ACHN (cell line): ENCODE measurements at regions of chr1 and their contacts with region 1.

Region 1: GRCh38 chr1:15803354-15803753 is 4.1 kb downstream of the UQCRHL start:
- DNase-seq: peak; percentile 47

Region 2: GRCh38 chr1:15902882-15903281 is 99.5 kb after region 1 on chr1:
- in situ Hi-C with region 1: no loop called
- DNase-seq: peak; percentile 73

Region 3: DNA sequence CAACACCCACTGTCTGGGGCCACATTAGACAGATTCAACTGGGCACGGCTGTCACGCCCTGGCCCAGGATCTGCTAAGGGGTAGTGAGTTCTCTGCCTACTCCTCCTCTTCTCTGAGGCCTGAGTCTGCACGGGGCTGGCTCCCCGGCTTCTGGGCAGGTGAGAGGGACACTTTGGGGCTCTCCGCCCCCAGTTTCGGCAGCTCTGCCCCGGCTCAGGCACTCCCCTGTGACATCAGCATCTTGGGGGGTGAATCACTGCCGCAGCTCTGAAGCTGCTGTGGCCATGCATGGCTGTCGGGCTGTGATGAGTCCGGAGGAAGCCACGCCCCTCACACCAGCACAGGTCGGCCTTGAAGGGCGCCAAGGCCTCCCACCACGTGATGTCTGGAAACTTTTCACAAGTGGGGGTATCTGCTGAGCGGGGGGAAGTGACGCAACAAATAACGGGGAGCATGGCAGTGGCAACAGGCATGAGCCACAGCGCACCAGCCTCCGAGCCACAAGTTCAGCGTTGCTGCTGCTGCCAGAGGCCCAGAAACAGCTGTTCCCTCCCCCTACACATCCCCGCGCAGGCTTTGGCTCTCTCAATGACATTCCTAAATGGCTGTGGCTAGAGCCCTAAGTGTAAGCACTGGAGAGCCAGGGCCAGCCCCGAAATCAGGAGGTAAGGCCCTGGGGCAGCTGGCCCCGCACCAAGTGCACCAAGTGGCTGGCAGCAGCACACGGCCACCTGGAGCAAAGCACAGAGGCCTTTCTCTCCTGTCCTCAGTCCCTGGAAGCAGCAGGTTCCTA is 146.3 kb after region 1 on chr1:
- in situ Hi-C with region 1: loop called (anchors 25 kb)
- DNase-seq: peak; percentile 87

Region 4: GRCh38 chr1:16048573-16049189 is 245.3 kb after region 1 on chr1:
- in situ Hi-C with region 1: no loop called
- DNase-seq: peak; percentile 71